ENCODE measurements at regions of chr4 and their contacts with region 1.

Region 1: GRCh38 chr4:80731996-80732395 is 298.5 kb upstream of the BMP3 start:
- DNase-seq: peak; percentile 42
- H3K4me3 Mint-ChIP-seq: no peak overlapping the region
- H3K27ac Mint-ChIP-seq: peak overlapping the region; percentile 58
- H3K4me1 Mint-ChIP-seq: peaks cover 20% of the 10 kb centered on the region
- H3K27me3 Mint-ChIP-seq: no peaks in the 10 kb centered on the region
- CTCF ChIP-seq: no peak

Region 2: DNA sequence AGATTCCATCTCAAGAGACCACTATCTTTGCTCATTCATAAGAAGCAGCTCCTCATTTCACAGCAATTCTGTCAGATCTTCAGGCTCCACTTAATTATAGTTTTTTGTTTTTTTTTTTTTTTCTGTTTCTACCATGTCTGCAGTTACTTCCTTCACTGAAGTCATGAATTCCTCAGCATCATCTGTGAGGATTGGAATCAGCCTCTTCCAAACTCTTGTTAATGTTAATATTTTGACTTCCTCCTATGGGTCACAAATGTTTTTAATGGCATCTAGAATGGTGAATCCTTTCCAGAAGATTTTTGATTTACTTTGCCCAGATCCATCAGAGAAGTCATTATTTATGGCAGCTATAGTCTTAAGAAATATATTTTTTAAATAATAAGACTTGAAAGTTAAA is 1902.7 kb before region 1 on chr4:
- CTCF ChIA-PET with region 1: no interaction called
- POLR2A ChIA-PET with region 1: no interaction called
- intact Hi-C with region 1: no loop called
- DNase-seq: no peak
- H3K4me3 Mint-ChIP-seq: no peak overlapping the region
- H3K27ac Mint-ChIP-seq: no peak overlapping the region
- H3K4me1 Mint-ChIP-seq: peaks cover 6% of the 10 kb centered on the region
- H3K27me3 Mint-ChIP-seq: no peaks in the 10 kb centered on the region
- CTCF ChIP-seq: no peak

Region 3: DNA sequence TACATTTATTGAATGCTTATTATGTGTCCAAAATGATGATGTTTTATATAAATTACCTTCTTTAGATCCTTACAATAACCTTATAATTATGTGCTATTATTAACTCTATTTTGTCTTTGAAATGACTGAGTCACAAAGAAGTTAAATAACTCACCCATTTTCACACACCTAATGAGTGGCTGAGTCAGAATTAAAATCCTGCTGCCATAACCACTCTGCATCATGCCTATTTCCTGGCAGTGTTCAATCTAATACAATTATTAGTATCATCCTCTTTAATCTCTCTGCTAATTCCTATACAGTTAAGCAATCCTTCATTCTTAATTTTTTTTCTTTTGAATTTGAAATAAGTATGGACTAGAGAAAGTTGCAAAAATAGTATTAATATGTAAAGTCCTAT is 53.6 kb before region 1 on chr4:
- CTCF ChIA-PET with region 1: no interaction called
- POLR2A ChIA-PET with region 1: no interaction called
- intact Hi-C with region 1: loop called (anchors 10 kb)
- DNase-seq: no peak
- H3K4me3 Mint-ChIP-seq: no peak overlapping the region
- H3K27ac Mint-ChIP-seq: no peak overlapping the region
- H3K4me1 Mint-ChIP-seq: no peaks in the 10 kb centered on the region
- H3K27me3 Mint-ChIP-seq: no peaks in the 10 kb centered on the region
- CTCF ChIP-seq: no peak

Region 4: GRCh38 chr4:80986011-80986410 is 254.0 kb after region 1 on chr4:
- CTCF ChIA-PET with region 1: no interaction called
- POLR2A ChIA-PET with region 1: no interaction called
- intact Hi-C with region 1: no loop called
- DNase-seq: no peak
- H3K4me3 Mint-ChIP-seq: no peak overlapping the region
- H3K27ac Mint-ChIP-seq: no peak overlapping the region
- H3K4me1 Mint-ChIP-seq: no peaks in the 10 kb centered on the region
- H3K27me3 Mint-ChIP-seq: no peaks in the 10 kb centered on the region
- CTCF ChIP-seq: no peak

Measured in MCF 10A (cell line).